Mucosa of descending colon (tissue), 3 donors: ENCODE measurements at regions of chr5 and their contacts with region 1.

Region 1: GRCh38 chr5:149317281-149318048 is 27.8 kb upstream of the GRPEL2 start:
- DNase-seq: peak in 1 of 3 donors; percentile 63
- ATAC-seq: peak; percentile 21
- H3K4me3 ChIP-seq: no peak overlapping the region
- H3K4me1 ChIP-seq: peaks cover 19% of the 10 kb centered on the region
- CTCF ChIP-seq: peak; percentile 49

Region 2: GRCh38 chr5:149367249-149367971 is 49.9 kb after region 1 on chr5:
- intact Hi-C with region 1: loop called in 1 of 2 experiments (anchors 2 kb)
- DNase-seq: peak in 2 of 3 donors; percentile 56 to 73
- ATAC-seq: peak; percentile 79
- H3K4me3 ChIP-seq: no peak overlapping the region
- H3K4me1 ChIP-seq: peaks cover 5% of the 10 kb centered on the region
- CTCF ChIP-seq: peak; percentile 41

Region 3: GRCh38 chr5:149381987-149382340 is 64.5 kb after region 1 on chr5:
- intact Hi-C with region 1: no loop called
- DNase-seq: peak in 2 of 3 donors; percentile 84 to 86
- ATAC-seq: peak; percentile 84
- H3K4me3 ChIP-seq: no peak overlapping the region
- H3K4me1 ChIP-seq: peaks cover 7% of the 10 kb centered on the region
- CTCF ChIP-seq: peak; percentile 87

Region 4: GRCh38 chr5:150567021-150567717 is 1249.7 kb after region 1 on chr5:
- intact Hi-C with region 1: no loop called
- DNase-seq: no peak
- ATAC-seq: peak; percentile 36
- H3K4me3 ChIP-seq: no peak overlapping the region
- H3K4me1 ChIP-seq: no peaks in the 10 kb centered on the region
- CTCF ChIP-seq: no peak